Head of caudate nucleus (tissue), 42 donors: ENCODE measurements at regions of chr11 and their contacts with region 1.

Region 1: DNA sequence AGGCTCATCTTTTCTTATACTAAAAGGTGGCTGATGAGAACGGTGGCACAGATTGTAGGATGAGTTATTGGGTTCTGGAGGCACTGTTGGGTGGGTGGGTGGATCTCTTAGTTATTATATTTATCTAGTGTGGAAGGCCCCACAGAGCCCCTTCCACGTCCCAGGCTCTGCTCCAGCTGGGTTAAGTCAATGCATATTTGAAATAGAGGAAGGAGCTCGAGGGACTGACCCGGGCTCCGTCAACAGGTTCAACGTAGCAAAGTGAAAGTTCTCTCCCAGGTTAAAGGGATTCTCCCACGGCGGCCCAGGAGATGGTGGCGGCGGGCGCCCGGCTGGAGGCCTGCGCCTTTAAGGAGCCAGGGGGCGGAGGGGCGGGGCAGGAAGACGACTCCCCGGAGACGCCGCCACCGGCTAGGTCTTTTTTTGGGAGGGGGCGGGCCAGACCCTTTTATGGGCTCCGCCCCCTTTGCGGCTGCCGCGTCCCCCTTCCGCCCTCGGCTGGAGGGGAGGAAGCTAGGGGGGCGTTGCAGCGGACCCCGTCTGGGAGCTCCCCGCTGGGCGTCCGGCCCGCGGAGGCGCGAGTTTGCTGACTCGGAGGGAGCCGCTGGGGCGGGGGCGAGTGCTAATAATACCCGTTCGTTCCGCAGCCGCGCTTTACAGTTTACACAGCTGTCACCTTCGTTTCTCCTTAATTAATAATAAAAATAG is 1.5 kb upstream of the INPPL1 start:
- DNase-seq: peak; percentile 75 to 95 (median 89)

Region 2: DNA sequence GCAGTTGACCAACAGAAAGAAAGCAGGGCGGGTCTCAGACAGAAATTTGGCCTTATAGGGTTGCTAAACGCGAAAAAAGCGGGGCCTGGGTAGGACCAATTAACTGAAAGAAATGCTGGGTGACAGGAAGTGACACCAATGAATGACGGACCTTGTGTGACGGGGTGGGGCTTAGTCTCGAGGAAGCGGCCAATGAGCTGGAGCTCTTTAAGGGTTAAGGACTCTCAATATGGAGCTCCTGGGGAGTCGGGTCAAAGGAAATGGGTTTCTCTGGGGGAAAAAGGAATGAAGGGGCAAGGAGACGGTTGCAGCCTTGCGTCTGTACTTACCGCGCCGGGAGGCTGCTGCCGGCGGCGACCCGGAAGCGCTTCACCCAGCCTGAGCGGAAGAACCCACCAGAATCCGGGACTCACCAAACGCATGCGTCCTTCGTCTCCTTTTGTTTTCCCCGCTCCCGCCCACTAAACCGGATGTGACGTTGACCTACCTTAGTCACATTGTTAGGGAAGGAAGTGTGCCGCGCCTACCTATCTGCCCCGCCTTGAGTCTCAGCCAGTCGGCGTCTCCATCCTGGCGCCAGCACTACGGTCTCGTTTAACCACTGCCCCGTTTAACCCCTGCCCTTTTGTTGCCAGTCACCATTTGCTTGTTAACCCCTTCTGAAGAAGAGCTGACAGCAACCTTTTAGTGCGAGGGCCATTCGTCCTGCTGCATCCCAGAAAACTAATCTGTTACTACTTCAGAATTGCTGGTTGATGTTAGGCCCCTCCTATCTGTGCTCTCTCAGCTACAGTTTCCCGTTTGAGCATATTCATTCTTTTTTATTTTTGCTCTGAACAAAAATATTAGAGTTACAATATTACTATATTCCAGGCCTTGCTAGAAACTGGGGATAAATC is 110.5 kb before region 1 on chr11 and contains the start of gene ANAPC15:
- intact Hi-C with region 1: loop called (anchors 5 kb)
- DNase-seq: peak; percentile 89 to 99 (median 96)

Region 3: GRCh38 chr11:72160319-72160718 is 62.7 kb before region 1 on chr11:
- intact Hi-C with region 1: no loop called
- DNase-seq: no peak

Region 4: DNA sequence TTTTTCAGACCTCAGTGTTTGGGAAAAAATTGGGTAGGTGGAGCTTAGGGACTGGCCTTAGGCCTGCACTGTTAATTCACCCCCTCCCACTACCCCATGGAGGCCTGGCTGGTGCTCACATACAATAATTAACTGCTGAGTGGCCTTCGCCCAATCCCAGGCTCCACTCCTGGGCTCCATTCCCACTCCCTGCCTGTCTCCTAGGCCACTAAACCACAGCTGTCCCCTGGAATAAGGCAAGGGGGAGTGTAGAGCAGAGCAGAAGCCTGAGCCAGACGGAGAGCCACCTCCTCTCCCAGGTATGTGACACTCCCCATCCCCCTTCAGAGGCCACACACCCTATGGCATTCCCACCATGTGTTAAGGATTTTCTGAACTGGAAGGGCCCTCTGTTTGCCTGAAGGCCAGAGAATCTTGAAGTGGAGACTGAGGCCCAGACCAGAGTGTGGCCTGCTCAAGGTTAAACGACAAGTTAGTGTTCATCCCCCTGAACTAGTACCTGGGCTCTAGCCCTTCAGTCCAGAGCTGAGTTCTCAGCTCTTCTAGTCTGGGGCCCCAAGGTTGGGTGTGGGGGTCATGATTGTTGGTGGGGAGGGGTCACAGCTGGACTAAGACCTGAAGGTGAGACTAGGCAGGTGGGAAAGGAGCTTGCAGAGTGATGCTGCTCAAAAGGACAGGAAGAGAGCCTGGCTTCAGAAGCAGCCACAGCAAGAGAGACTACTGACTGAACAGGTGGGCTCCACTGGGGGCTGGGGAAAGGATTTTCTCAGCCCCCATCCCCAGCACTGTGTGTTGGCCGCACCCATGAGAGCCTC is 33.4 kb before region 1 on chr11:
- intact Hi-C with region 1: no loop called
- DNase-seq: peak in 30 of 42 donors; percentile 6 to 67 (median 27)

Region 5: GRCh38 chr11:72413914-72414628 is 191.0 kb after region 1 on chr11:
- intact Hi-C with region 1: loop called (anchors 10 kb)
- DNase-seq: peak; percentile 74 to 95 (median 88)